ENCODE measurements at regions of chr11 and their contacts with region 1.

Region 1: DNA sequence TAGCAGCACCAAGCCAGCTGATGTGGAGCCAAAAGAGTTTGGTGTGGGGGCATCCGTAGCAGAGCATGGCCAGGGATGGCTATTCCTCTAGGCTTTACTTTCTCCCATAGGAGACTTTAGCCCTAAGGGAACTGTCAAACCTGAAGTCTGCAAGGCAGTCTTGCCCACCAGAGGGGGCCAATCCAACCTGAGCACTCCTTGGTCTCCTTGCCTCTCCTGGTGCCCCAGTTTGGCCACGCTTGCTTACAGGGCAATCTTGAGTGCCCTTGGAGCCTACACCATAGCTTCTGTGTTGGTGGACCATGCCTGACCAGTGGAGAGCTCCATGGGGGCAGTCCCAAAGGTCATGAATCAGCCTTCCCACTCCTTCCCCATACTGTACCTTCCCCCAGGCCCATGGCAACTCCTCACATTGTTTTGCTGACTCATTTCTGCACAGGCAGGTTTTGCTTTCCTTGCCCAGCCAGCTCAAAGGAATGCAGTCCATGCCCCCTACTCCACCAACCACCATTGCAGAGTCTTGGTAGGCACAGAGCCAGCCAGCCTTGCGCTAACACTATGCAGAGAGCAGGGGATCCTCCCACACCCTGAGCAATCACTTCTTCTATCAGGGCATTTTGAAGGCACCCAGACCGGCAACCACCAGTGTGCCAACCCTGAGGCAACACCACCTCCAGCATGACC is 1421.2 kb upstream of the RAG2 start:
- DNase-seq: peak; percentile 96 to 97
- H3K4me3 ChIP-seq: no peak overlapping the region; the same call in 1 of the 2 replicates
- H3K27ac ChIP-seq: peak overlapping the region; percentile 80
- H3K4me1 ChIP-seq: peaks cover 32% of the 10 kb centered on the region
- H3K27me3 ChIP-seq: no peaks in the 10 kb centered on the region
- CTCF ChIP-seq: peak; percentile 50

Region 2: GRCh38 chr11:37504060-37504611 is 515.1 kb before region 1 on chr11:
- CTCF ChIA-PET with region 1: no interaction called
- POLR2A ChIA-PET with region 1: no interaction called
- intact Hi-C with region 1: loop called (anchors 10 kb)
- DNase-seq: peak; percentile 39 to 96
- H3K4me3 ChIP-seq: peak overlapping the region; percentile 33; the same call in 1 of the 2 replicates
- H3K27ac ChIP-seq: peak overlapping the region; percentile 99
- H3K4me1 ChIP-seq: peaks cover 65% of the 10 kb centered on the region
- H3K27me3 ChIP-seq: no peaks in the 10 kb centered on the region
- CTCF ChIP-seq: no peak

Region 3: DNA sequence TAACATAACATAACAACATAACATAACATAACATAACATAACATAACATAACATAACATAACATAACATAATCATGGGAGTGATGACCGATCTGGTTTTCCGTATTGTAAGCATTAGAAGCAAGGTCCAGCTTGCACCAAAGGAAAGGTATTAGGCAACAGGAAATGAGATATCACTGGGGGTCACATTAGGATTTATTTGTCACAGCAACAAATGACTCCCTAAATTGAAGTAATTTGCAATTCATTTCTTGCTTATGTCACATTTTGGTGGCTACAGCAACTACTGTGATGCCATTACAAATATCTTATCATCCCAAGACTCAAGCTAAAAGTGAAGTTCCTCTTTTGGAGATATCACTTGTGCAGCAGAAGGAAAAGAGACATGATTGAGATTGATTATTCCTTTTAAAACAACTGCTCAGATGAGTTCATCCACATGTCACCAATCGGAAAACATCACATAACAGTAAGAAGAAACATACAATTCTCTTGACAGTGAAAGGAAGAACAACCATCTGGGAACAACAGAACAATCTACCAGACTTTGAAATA is 90.0 kb before region 1 on chr11:
- CTCF ChIA-PET with region 1: no interaction called
- POLR2A ChIA-PET with region 1: no interaction called
- intact Hi-C with region 1: no loop called
- DNase-seq: no peak
- H3K4me3 ChIP-seq: no peak overlapping the region
- H3K27ac ChIP-seq: no peak overlapping the region
- H3K4me1 ChIP-seq: peaks cover 6% of the 10 kb centered on the region; the same call in 1 of the 2 replicates
- H3K27me3 ChIP-seq: no peaks in the 10 kb centered on the region
- CTCF ChIP-seq: no peak

Region 4: DNA sequence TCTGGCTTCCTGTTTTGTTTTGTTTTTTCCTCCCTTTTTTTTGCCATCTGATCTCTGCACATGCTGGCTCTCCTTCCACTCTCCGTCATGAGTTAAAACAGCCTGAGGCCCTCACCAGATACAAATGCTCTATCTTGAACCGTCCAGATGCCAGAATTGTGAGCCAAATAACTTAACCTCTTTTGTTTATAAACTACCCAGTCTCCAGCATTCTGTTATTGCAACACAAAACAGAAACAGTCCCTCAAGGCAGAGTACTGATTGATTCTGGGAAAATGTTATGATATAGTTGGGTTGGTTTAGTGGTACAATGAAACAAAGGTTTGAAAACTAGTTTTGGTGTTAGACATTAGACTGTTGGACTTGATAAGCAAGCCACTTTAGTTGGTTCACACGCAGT is 31.2 kb before region 1 on chr11:
- CTCF ChIA-PET with region 1: no interaction called
- POLR2A ChIA-PET with region 1: no interaction called
- intact Hi-C with region 1: loop called (anchors 1 kb)
- DNase-seq: peak; percentile 30 to 68
- H3K4me3 ChIP-seq: no peak overlapping the region
- H3K27ac ChIP-seq: peak overlapping the region; percentile 27; the same call in 1 of the 2 replicates
- H3K4me1 ChIP-seq: 0 out of 2 replicates have a peak, but pooled peaks cover 6% of the 10 kb centered on the region
- H3K27me3 ChIP-seq: no peaks in the 10 kb centered on the region
- CTCF ChIP-seq: no peak

Region 5: GRCh38 chr11:38089726-38090125 is 70.5 kb after region 1 on chr11:
- CTCF ChIA-PET with region 1: no interaction called
- POLR2A ChIA-PET with region 1: no interaction called
- intact Hi-C with region 1: loop called (anchors 1 kb)
- DNase-seq: peak; percentile 88 to 99
- H3K4me3 ChIP-seq: no peak overlapping the region
- H3K27ac ChIP-seq: peak overlapping the region; percentile 70
- H3K4me1 ChIP-seq: peaks cover 27% of the 10 kb centered on the region
- H3K27me3 ChIP-seq: no peaks in the 10 kb centered on the region
- CTCF ChIP-seq: no peak

Region 6: DNA sequence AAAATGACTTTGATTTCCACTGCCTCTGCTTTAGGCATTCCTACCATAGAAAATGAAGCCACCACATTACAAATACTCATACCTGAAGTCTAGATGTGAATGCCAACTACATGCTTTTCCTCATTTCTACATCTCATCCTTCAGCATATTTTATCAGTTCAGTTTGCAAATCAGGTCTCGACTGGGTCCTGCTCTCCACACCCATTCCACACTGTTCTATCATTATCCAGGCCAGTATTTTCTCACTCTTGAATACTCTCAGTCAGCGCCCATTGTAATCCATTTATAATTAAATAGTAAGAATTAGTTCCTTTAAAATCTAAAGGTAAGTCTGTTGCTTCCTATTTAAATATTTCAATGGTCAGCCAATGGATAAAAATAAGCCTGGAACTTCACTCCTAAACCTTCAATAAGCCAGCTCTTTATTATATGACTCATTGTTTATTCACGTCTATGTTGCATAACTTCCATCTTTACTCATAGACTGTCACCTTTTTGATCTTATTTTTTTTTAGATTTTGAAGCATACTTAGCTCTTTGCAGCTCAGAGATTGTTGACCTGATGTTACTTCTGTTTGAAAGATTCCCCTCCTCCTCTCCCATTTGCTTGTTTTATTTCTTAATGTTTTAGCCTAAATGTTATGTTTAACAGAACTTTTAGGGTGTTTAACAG is 149.9 kb after region 1 on chr11:
- CTCF ChIA-PET with region 1: no interaction called
- POLR2A ChIA-PET with region 1: no interaction called
- intact Hi-C with region 1: loop called (anchors 2 kb)
- DNase-seq: peak; percentile 5 to 88
- H3K4me3 ChIP-seq: no peak overlapping the region
- H3K27ac ChIP-seq: peak overlapping the region; percentile 51
- H3K4me1 ChIP-seq: peaks cover 22% of the 10 kb centered on the region
- H3K27me3 ChIP-seq: no peaks in the 10 kb centered on the region
- CTCF ChIP-seq: no peak